CD4-positive, alpha-beta memory T cell (primary cell): ENCODE measurements at regions of chr7 and their contacts with region 1.

Region 1: GRCh38 chr7:8176370-8177081 is 85.4 kb downstream of the ICA1 start:
- DNase-seq: peak; percentile 64 to 83 (median 69)
- H3K4me3 ChIP-seq: peak overlapping the region in 1 of 2 donors; percentile 34
- H3K4me3 Mint-ChIP-seq: peak overlapping the region; percentile 71 to 87 (median 80)
- H3K27ac ChIP-seq: peak overlapping the region; percentile 69
- H3K27ac Mint-ChIP-seq: peak overlapping the region; percentile 91 to 98 (median 97)
- H3K4me1 ChIP-seq: peaks cover 53% of the 10 kb centered on the region
- H3K4me1 Mint-ChIP-seq: peaks cover 45 to 65% (median 54%) of the 10 kb centered on the region in 4 donors
- H3K27me3 ChIP-seq: no peaks in the 10 kb centered on the region
- H3K27me3 Mint-ChIP-seq: no peaks in the 10 kb centered on the region

Region 2: DNA sequence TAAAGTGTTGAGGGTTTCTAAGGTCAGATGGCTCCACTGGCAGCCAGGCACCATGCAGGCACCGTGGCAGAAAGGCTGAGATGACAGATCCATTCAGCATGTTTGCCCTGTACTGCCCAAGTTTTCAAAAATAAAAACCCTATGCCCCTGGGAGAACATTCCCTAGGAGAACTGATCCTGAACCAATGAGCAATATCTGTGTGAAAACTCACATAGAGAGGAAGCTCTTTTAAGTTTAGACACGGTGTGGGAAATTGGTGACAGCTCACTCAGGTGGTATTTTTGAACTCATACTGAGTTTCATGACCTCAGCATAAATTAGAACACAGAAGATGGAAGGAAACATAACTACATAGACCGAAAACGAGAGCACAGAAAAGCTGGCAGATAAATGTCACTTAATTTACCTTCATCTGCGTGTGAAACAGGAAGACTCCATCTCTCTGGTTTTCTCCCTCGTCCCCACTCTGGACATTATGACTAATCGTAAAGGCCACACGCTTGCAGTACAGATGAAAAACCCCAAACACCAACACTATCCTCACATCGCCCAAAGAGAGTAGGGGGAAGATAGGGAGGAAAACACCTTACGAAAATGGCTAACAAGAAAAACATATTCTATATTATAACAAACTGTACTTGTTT is 42.3 kb before region 1 on chr7:
- CTCF ChIA-PET with region 1: interaction called, 4 read pairs
- POLR2A ChIA-PET with region 1: interaction called, 5 read pairs
- intact Hi-C with region 1: loop called (anchors 1 kb)
- DNase-seq: peak; percentile 38 to 63 (median 48)
- H3K4me3 ChIP-seq: peak overlapping the region in 1 of 2 donors; percentile 15
- H3K4me3 Mint-ChIP-seq: peak overlapping the region; percentile 17 to 85 (median 59)
- H3K27ac ChIP-seq: peak overlapping the region; percentile 57
- H3K27ac Mint-ChIP-seq: peak overlapping the region; percentile 93 to 100 (median 97)
- H3K4me1 ChIP-seq: peaks cover 74% of the 10 kb centered on the region
- H3K4me1 Mint-ChIP-seq: peaks cover 48 to 88% (median 68%) of the 10 kb centered on the region in 4 donors
- H3K27me3 ChIP-seq: no peaks in the 10 kb centered on the region
- H3K27me3 Mint-ChIP-seq: no peaks in the 10 kb centered on the region

Region 3: DNA sequence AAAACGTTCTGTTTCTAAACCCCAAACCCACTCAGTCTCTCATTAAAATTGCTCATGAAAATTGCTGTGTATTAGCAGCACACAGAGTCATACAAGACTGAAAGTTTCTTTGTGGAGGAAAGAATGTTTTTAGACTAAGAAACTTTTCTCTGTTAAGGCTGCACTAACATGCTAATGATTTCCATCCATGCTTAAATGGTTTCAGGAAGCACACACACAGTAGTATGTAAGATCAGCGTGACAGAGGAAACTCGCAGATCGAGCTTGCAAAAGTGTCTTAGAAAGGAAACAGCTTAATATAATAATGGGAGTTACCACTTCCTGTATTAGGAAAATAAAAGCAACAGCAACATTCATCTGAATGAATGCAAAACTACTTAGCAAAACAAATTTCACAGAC is 27.3 kb before region 1 on chr7:
- CTCF ChIA-PET with region 1: interaction called, 3 read pairs
- POLR2A ChIA-PET with region 1: no interaction called
- intact Hi-C with region 1: loop called (anchors 2 kb)
- DNase-seq: no peak
- H3K4me3 ChIP-seq: no peak overlapping the region
- H3K4me3 Mint-ChIP-seq: peak overlapping the region; percentile 19 to 73 (median 55)
- H3K27ac ChIP-seq: peak overlapping the region; percentile 13
- H3K27ac Mint-ChIP-seq: peak overlapping the region; percentile 58 to 92 (median 84)
- H3K4me1 ChIP-seq: peaks cover 57% of the 10 kb centered on the region
- H3K4me1 Mint-ChIP-seq: peaks cover 45 to 75% (median 62%) of the 10 kb centered on the region in 4 donors
- H3K27me3 ChIP-seq: no peaks in the 10 kb centered on the region
- H3K27me3 Mint-ChIP-seq: no peaks in the 10 kb centered on the region

Region 4: DNA sequence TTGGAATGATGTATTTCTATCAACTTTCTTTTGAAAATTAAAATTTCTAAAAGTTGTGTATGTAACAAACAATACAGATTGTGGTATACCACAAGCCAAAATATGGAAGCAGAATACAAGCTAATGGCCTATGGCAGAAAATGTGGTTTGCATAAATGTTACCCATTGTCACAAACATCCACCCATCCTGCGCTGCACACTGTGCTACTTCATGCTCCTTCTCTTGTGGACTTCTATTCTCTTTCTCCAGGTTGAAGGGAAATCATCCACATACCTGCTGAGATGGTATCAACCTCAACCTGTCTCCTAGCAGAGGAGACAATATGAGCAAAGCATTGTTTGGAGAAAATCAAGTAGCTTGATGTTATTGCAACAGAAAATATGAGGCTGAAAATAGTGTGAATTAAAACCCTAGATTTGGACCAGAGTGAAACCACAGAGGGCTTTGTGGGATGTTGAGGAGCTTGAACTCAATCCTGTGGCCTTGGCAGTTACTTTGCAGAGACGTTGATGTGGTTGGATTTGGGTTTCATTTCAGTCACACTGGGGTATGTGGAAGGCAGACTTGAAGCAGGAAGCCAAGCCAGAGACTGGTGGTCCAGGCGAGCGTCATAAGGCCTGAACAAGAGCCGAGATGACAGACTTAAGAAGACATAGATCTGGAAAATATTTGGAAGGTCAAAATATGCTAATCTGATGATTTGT is 21.6 kb after region 1 on chr7:
- CTCF ChIA-PET with region 1: interaction called, 3 read pairs
- POLR2A ChIA-PET with region 1: interaction called, 10 read pairs
- intact Hi-C with region 1: no loop called
- DNase-seq: peak in 4 of 5 donors; percentile 17 to 47 (median 21)
- H3K4me3 ChIP-seq: no peak overlapping the region
- H3K4me3 Mint-ChIP-seq: peak overlapping the region in 6 of 8 donors; percentile 1 to 58 (median 12)
- H3K27ac ChIP-seq: no peak overlapping the region
- H3K27ac Mint-ChIP-seq: peak overlapping the region in 2 of 7 donors; percentile 18 to 23
- H3K4me1 ChIP-seq: peaks cover 13% of the 10 kb centered on the region
- H3K4me1 Mint-ChIP-seq: peaks cover 9 to 27% (median 18%) of the 10 kb centered on the region in 4 donors
- H3K27me3 ChIP-seq: no peaks in the 10 kb centered on the region
- H3K27me3 Mint-ChIP-seq: no peaks in the 10 kb centered on the region

Region 5: DNA sequence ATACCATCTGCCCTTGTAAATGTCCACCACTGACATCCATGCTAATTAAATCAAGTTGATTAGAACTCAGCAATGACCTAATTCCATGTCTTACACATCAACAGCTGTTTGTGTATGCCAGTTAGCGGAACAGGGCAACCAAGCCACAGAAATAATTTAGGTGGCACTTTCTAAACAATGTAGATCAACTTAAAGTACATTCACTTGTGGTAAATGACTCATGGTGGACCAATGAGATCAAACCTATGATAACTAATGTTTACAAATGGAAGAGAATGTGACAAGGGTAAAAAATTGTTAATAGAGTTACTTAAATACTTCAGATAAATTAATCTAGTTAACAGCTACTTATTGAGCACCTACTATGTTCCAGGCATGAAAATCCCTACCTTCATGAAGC is 148.5 kb after region 1 on chr7:
- CTCF ChIA-PET with region 1: no interaction called
- POLR2A ChIA-PET with region 1: no interaction called
- intact Hi-C with region 1: no loop called
- DNase-seq: no peak
- H3K4me3 ChIP-seq: no peak overlapping the region
- H3K4me3 Mint-ChIP-seq: no peak overlapping the region
- H3K27ac ChIP-seq: no peak overlapping the region
- H3K27ac Mint-ChIP-seq: no peak overlapping the region
- H3K4me1 ChIP-seq: no peaks in the 10 kb centered on the region
- H3K4me1 Mint-ChIP-seq: no peaks in the 10 kb centered on the region
- H3K27me3 ChIP-seq: no peaks in the 10 kb centered on the region
- H3K27me3 Mint-ChIP-seq: peaks cover 14 to 26% of the 10 kb centered on the region in 2 donors